ENCODE measurements at regions of chr12 and their contacts with region 1.

Region 1: GRCh38 chr12:38316391-38317129 is at the start of gene ALG10B:
- DNase-seq: peak; percentile 90
- H3K4me3 Mint-ChIP-seq: peak within 1 kb of the TSS; percentile 97
- H3K27ac Mint-ChIP-seq: peak within 1 kb of the TSS; percentile 90
- H3K4me1 Mint-ChIP-seq: peaks cover 25% of the 10 kb centered on the region
- H3K27me3 Mint-ChIP-seq: no peaks in the 10 kb centered on the region
- total RNA-seq, gene ALG10B: 11.8 and 15.9 TPM in 2 replicates

Region 2: DNA sequence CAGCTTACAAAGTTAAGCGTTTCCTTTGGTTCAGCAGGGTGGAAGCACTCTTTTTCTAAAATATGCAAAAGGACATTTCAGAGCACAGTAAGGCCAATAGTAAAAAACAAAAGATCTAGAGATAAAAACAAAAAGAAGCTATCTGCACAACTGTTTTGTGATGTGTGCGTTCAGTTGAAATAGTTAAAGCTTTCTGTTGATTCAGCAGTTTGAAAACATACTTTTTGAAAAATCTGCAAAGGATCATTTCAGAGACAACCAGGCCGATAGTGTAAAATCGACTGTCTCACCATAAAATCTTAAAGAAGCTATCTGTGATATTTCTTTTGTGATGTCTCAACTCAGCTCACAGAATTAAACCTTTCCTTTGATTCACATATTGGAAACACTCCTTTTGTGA is 300.0 kb before region 1 on chr12:
- intact Hi-C with region 1: no loop called
- DNase-seq: no peak
- H3K4me3 Mint-ChIP-seq: no peak overlapping the region
- H3K27ac Mint-ChIP-seq: no peak overlapping the region
- H3K4me1 Mint-ChIP-seq: no peaks in the 10 kb centered on the region
- H3K27me3 Mint-ChIP-seq: no peaks in the 10 kb centered on the region

Region 3: GRCh38 chr12:38138225-38139221 is 178.0 kb before region 1 on chr12:
- intact Hi-C with region 1: loop called (anchors 1 kb)
- DNase-seq: peak; percentile 30
- H3K4me3 Mint-ChIP-seq: peak overlapping the region; percentile 83
- H3K27ac Mint-ChIP-seq: no peak overlapping the region
- H3K4me1 Mint-ChIP-seq: no peaks in the 10 kb centered on the region
- H3K27me3 Mint-ChIP-seq: peaks cover 5% of the 10 kb centered on the region

Measured in activated T-helper 1 cell treated with anti-CD3 and anti-CD28 coated beads, Interleukin-12 subunit alpha, Interleukin-12 subunit beta, Interleukin-2, Interleukin-4 antibody, amounts not matched to agents 30 ng/mL and 10 ng/mL and 1 ng/mL, durations not matched to agents 14 hours and 24 hours and 36 hours (primary cell).